ENCODE measurements at regions of chr9 and their contacts with region 1.

Region 1: GRCh38 chr9:137070201-137070905 is at the start of gene SAPCD2:
- DNase-seq: peak; percentile 85
- H3K4me3 Mint-ChIP-seq: peak within 1 kb of the TSS; percentile 86
- H3K27ac Mint-ChIP-seq: peak within 1 kb of the TSS; percentile 91
- H3K4me1 Mint-ChIP-seq: peaks cover 16% of the 10 kb centered on the region
- H3K27me3 Mint-ChIP-seq: peaks cover 3% of the 10 kb centered on the region
- total RNA-seq, gene SAPCD2: 23.9 and 25.1 TPM in 2 replicates

Region 2: GRCh38 chr9:137046098-137046787 is 24.1 kb before region 1 on chr9 and contains the start of gene NPDC1:
- intact Hi-C with region 1: loop called (anchors 1 kb)
- DNase-seq: peak; percentile 81
- H3K4me3 Mint-ChIP-seq: peak within 1 kb of the TSS; percentile 77
- H3K27ac Mint-ChIP-seq: peak within 1 kb of the TSS; percentile 44
- H3K4me1 Mint-ChIP-seq: peaks cover 5% of the 10 kb centered on the region
- H3K27me3 Mint-ChIP-seq: peaks cover 29% of the 10 kb centered on the region
- total RNA-seq, gene NPDC1: 78.2 and 80.1 TPM in 2 replicates

Region 3: DNA sequence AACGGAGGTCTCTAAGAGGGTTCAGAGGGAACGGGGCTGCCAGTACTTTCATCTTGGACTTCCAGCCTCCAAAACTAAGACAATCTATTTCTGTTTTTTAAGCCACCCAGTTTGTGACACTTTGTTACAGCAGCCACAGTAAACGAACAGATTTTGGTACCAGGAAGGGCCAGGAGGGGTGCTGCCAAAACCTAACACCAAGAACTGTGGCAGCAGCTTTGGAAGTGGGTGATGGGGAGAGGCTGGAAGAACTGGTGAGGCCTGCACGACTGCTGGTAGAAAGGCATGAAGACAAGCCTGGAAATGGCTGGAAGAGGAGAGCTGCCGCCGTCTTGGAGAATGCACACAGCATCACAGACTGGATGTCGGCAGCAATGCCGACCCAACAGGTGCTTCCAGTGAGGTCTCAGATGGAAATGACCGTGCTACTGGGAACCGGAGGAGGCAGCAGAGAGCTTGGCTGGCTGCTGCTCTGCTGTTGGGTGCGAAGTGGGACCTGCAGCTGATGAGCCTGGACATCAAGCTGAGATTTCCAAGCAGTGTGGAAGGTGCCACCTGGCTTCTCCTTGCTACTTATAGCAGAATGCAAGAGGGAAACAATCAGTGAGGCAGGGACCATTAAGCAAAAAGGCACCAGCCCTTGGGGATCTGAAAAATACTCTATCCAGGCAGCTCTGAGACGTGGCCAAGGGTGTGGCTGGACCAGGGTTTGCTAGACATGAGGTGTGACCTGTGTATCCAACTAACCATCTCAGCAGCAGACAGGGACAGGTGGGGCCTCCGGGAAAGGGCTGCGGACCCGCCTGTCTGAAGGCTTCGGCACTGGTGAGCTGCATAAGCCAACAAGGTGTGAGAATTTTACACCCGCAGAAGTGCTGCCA is 106.2 kb after region 1 on chr9:
- intact Hi-C with region 1: no loop called
- DNase-seq: no peak
- H3K4me3 Mint-ChIP-seq: no peak overlapping the region
- H3K27ac Mint-ChIP-seq: no peak overlapping the region
- H3K4me1 Mint-ChIP-seq: no peaks in the 10 kb centered on the region
- H3K27me3 Mint-ChIP-seq: peaks cover 11% of the 10 kb centered on the region